ENCODE measurements at regions of chr13 and their contacts with region 1.

Region 1: DNA sequence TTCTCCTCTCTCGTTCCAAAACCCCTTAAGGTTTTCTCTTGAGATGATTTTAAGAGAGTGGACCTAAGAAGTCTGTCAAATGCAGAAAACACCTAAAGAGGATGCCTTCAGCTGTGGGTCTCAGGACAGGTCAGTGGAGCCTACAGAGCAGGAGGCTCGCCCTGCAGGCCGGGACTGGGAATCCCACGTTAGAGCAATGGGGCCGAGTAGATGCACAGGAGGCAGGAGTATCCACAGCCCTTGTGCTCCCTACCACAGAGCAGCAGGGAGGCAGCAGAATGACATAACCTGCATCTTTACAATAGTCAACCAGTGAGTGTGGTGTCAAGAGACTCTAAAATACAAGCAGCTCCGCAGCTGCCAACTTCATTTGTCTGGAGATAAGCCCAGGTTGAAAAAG is 229.4 kb downstream of the MTUS2 start:
- DNase-seq: no peak
- H3K4me3 ChIP-seq: no peak overlapping the region
- H3K27ac ChIP-seq: no peak overlapping the region
- H3K4me1 ChIP-seq: peaks cover 0 to 4% (median 2%) of the 10 kb centered on the region in 4 experiments; a peak in 2 of 7 replicates
- H3K27me3 ChIP-seq: no peaks in the 10 kb centered on the region
- CTCF ChIP-seq: no peak
- EP300 ChIP-seq: no peak
- POLR2A ChIP-seq: no peak
- RAD21 ChIP-seq: no peak

Region 2: DNA sequence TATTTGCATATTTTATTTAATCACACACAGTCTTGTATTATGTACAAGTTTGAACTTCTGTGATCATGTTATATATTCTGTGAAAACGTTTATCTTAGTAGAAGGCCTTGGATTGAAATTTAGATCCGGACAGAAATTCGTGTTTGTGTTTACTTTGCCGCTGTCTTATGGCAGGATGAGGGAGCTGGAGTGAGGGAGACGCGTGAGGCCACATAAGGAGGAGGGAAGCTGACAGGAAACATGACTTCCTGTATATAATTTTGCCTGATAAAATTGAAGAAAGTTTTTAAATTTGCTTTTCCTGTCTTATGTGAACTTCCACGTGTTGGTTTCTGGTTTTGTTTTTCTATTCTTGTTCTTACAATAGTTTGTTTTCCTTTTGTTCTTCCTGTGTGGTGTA is 29.2 kb before region 1 on chr13:
- CTCF ChIA-PET with region 1: no interaction called
- POLR2A ChIA-PET with region 1: no interaction called
- DNase-seq: no peak
- H3K4me3 ChIP-seq: no peak overlapping the region
- H3K27ac ChIP-seq: no peak overlapping the region
- H3K4me1 ChIP-seq: no peaks in the 10 kb centered on the region
- H3K27me3 ChIP-seq: no peaks in the 10 kb centered on the region
- CTCF ChIP-seq: no peak
- EP300 ChIP-seq: no peak
- POLR2A ChIP-seq: no peak
- RAD21 ChIP-seq: no peak

Region 3: DNA sequence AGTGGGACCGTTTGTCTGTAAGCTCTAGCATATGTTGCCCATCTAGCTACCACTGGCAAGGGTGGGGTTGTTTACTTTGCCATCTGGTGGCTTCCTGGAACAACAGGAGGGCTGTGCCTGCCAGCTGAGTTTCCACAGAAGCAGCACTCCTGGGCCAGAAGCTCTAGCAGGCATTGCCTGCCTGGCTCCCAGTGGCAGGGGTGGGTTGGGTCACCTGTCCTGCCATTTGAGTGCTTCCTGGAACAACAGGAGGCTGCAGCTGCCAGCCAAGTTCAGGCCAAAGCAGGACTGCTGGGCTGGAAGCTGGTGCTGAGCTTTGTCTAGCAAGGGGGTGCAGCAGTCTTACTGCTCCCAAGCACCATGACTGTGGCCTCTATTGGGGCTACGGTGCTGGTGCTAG is 10.3 kb after region 1 on chr13:
- CTCF ChIA-PET with region 1: interaction called, 10 read pairs
- POLR2A ChIA-PET with region 1: no interaction called
- DNase-seq: no peak
- H3K4me3 ChIP-seq: no peak overlapping the region
- H3K27ac ChIP-seq: no peak overlapping the region
- H3K4me1 ChIP-seq: no peaks in the 10 kb centered on the region
- H3K27me3 ChIP-seq: peaks cover 0 to 1% (median 0%) of the 10 kb centered on the region in 4 experiments; a peak in 1 of 7 replicates
- CTCF ChIP-seq: no peak
- EP300 ChIP-seq: no peak
- POLR2A ChIP-seq: no peak
- RAD21 ChIP-seq: no peak

Measured in H1 (cell line).